Aorta (tissue), 5 donors: ENCODE measurements at regions of chr3 and their contacts with region 1.

Region 1: GRCh38 chr3:66797889-66798560 is 200.1 kb upstream of the KBTBD8 start:
- DNase-seq: no peak
- ATAC-seq: no peak
- H3K4me3 ChIP-seq: no peak overlapping the region
- H3K27ac ChIP-seq: no peak overlapping the region
- H3K4me1 ChIP-seq: no peaks in the 10 kb centered on the region
- H3K27me3 ChIP-seq: no peaks in the 10 kb centered on the region

Region 2: GRCh38 chr3:66693461-66694031 is 104.5 kb before region 1 on chr3:
- intact Hi-C with region 1: loop called in 1 of 2 experiments (anchors 10 kb)
- DNase-seq: no peak
- ATAC-seq: no peak
- H3K4me3 ChIP-seq: no peak overlapping the region
- H3K27ac ChIP-seq: no peak overlapping the region
- H3K4me1 ChIP-seq: no peaks in the 10 kb centered on the region
- H3K27me3 ChIP-seq: no peaks in the 10 kb centered on the region